Activated T-helper 1 cell treated with anti-CD3 and anti-CD28 coated beads, Interleukin-12 subunit alpha, Interleukin-12 subunit beta, Interleukin-2, Interleukin-4 antibody, amounts not matched to agents 30 ng/mL and 10 ng/mL and 1 ng/mL, durations not matched to agents 14 hours and 24 hours and 36 hours (primary cell): ENCODE measurements at regions of chr12 and their contacts with region 1.

Region 1: DNA sequence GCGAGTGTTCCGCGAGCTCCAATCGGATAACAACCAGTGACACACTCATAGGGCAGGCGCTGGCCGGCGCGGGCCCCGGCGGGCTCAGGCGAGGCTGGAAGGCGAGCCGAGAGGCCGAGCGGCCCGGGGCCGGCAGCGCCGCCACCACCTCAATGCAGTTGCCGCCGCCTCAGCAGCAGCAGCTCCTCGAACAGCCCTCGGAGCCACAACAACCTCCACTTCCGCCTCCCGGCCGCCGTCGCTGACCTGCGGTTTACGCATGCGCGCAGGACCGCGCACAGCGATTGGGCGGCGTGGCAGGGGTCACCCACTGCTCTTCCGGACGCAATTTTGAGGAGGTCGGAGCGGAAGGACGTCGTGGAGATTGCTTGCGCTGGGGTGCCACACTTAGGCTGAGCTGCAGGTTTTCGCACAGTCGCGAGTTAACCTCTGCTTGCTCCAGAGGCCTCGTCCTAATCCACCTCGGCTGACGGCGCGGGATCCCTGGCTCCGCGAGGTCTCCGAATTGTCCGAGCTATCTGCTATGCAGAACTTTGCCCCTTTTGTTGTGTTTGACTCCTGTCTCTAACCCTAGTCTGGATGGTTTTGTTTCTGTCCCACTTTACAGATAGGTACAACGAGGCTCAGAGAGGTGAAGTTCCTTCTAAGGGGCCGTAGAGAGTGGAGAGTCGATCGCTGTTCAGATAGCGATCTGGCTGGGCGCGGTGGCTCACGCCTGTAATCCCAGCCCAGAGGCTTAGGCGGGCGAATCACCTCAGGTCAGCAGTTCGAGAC is at the starts of genes ACAD10 and BRAP:
- DNase-seq: peak; percentile 96
- H3K4me3 Mint-ChIP-seq: peak within 1 kb of the TSS; percentile 97
- H3K27ac Mint-ChIP-seq: peak within 1 kb of the TSS; percentile 98
- H3K4me1 Mint-ChIP-seq: peaks cover 31% of the 10 kb centered on the region
- H3K27me3 Mint-ChIP-seq: no peaks in the 10 kb centered on the region
- total RNA-seq, gene ACAD10: 21.2 and 24.2 TPM in 2 replicates
- total RNA-seq, gene BRAP: 22.1 and 22.2 TPM in 2 replicates

Region 2: DNA sequence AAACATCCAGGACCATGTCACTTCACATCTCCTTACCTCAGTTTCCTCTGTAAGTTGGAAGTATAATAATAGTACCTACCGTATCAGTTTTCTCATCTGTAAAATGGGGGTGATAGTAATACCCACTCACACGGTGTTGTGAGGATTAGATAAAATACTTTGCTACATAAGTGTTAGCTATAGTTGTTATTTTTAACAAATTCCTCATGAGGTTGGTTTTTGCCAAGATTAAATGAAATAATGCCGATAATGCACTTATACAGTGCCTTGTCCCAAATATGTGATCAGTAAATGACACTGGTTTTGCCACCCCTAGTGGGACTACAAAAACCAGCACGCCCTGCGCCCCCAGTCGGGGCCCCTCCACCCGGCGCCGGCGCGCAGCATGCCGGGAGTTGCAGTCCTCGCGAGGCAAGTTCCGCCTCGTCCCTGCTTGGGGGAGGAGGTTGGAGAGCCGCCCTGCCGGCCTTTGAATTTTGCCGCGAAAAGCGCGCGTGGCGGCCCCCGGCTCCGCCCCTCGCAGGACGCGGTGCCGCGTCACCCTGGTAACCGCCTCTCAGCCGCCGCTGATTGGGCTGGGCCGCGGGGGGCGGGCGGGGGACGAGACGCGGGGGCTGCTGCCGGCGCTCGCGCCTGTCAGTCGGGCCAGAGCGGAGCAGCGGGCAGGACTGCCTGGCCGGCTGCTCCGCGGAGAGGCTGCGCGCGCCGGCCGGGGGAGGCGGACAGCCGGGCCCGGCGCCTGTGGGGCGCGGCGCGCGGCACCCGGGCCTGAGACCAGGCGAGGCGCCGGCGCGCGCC is 1972.5 kb before region 1 on chr12 and contains the start of gene FAM222A:
- intact Hi-C with region 1: loop called (anchors 5 kb)
- DNase-seq: peak; percentile 94
- H3K4me3 Mint-ChIP-seq: no peak within 1 kb of the TSS
- H3K27ac Mint-ChIP-seq: no peak within 1 kb of the TSS
- H3K4me1 Mint-ChIP-seq: no peaks in the 10 kb centered on the region
- H3K27me3 Mint-ChIP-seq: peaks cover 62% of the 10 kb centered on the region
- total RNA-seq, gene FAM222A: 2.4 TPM in 2 replicates

Region 3: DNA sequence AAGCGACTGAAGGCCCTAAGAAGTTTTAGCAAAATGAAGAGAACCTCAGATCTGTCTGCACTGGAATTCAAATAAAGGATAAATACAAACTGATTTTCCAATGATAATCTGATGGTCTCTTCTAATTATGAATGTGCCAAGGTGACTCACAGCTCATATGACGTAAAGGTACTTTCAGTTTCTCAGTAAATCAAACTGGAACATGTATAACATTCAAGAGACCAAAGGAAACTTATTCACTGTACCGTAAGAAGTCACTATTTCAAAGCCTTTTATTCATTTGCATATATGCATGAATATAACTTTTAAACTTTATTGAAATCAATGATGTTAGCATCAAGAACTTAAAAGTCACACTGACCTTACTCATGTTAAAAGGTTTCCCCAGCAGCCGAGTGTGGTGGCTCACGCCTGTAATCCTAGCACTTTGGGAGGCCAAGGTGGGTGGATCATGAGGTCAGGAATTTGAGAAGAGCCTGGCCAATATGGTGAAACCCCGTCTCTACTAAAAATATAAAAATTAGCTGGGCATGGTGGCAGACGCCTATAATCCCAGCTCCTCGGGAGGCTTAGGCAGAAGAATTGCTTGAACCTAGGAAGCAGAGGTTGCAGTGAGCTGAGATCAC is 139.1 kb before region 1 on chr12:
- intact Hi-C with region 1: loop called (anchors 5 kb)
- DNase-seq: no peak
- H3K4me3 Mint-ChIP-seq: peak overlapping the region; percentile 11
- H3K27ac Mint-ChIP-seq: peak overlapping the region; percentile 95
- H3K4me1 Mint-ChIP-seq: peaks cover 29% of the 10 kb centered on the region
- H3K27me3 Mint-ChIP-seq: no peaks in the 10 kb centered on the region

Region 4: DNA sequence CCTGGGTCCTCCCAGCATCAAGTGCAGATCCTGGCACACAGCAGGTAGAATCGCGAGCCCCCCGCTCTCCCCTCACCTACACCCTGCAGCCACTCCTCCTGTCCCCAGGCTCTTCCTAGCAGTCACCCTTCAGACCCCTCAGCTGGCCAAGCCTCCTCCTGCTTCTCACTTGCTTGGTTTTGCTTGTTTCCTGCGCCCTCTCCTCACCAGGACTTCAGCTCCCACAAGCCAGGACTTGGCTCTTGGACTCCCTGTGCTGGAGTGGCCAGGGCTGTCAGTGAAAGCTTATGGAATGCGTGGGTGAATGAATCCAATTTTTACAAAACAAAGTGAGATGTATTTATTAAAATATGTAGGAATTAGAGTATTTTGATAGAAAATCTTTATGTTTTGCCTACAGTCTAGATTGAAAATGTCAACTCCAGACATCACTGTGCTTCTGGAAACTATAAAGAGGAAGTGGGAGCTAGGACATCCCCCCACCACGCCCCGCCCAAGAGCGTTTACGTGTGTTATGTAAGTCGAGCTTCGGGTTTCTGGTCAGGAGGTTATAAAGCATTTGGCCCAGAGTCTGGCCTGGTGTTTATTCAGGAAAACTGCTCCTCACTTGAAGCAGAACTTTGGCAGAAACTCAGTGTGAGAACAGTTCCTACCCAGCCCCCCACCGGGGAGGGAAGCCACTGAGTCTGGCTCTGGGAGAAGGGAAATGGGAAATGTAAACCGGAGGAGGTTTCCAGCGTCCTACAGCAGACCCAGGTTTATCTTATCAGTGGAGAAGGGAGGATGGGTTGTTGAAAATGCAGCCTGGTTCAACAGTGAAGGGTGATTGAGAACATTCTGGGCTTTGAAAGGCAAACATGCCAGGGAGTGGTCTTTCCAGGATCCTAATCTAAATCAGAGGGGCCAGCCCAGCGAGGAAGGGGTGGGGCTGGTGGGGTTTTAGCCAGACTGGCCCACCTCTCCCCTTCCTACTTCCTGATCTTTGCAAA is 89.6 kb after region 1 on chr12:
- intact Hi-C with region 1: no loop called
- DNase-seq: no peak
- H3K4me3 Mint-ChIP-seq: no peak overlapping the region
- H3K27ac Mint-ChIP-seq: no peak overlapping the region
- H3K4me1 Mint-ChIP-seq: peaks cover 6% of the 10 kb centered on the region
- H3K27me3 Mint-ChIP-seq: peaks cover 11% of the 10 kb centered on the region

Region 5: GRCh38 chr12:111812881-111813741 is 127.2 kb after region 1 on chr12:
- intact Hi-C with region 1: loop called (anchors 1 kb)
- DNase-seq: peak; percentile 47
- H3K4me3 Mint-ChIP-seq: no peak overlapping the region
- H3K27ac Mint-ChIP-seq: no peak overlapping the region
- H3K4me1 Mint-ChIP-seq: peaks cover 6% of the 10 kb centered on the region
- H3K27me3 Mint-ChIP-seq: peaks cover 2% of the 10 kb centered on the region

Region 6: DNA sequence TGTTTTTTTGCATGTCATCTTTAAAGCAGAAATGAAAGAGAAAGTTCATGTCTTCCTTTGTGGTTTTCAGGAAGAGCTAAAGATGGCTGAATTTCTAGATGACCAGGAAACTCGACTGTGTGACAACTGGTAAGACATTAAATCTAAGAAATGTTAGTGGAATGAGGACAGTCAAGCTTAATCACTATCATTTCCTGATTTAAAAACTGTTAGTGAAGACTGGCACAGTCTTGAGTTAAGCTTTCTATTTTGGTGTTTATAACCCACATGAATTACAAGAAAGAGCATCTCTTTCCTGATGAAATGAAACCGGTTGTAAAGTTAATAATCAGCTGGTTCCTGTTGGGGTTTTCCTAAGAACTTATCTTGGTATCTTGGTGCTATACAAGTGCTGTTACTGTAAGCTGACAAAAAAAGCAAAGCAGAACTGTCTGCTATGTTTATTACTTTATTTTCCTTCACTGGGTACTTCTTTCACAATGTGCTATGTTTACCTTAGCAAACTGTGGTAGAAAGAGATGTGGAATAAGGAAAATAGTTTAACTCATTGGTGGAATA is 444.6 kb after region 1 on chr12:
- intact Hi-C with region 1: loop called (anchors 5 kb)
- DNase-seq: no peak
- H3K4me3 Mint-ChIP-seq: peak overlapping the region; percentile 77
- H3K27ac Mint-ChIP-seq: peak overlapping the region; percentile 79
- H3K4me1 Mint-ChIP-seq: peaks cover 55% of the 10 kb centered on the region
- H3K27me3 Mint-ChIP-seq: no peaks in the 10 kb centered on the region